Activated CD4-positive, alpha-beta memory T cell treated with anti-CD3 and anti-CD28 coated beads for 36 hours (primary cell): ENCODE measurements at regions of chr17 and their contacts with region 1.

Region 1: GRCh38 chr17:38667099-38667786 is 7.5 kb downstream of the EPOP start:
- DNase-seq: peak; percentile 75
- H3K4me3 Mint-ChIP-seq: no peak overlapping the region
- H3K27ac Mint-ChIP-seq: no peak overlapping the region
- H3K4me1 Mint-ChIP-seq: peaks cover 16% of the 10 kb centered on the region
- H3K27me3 Mint-ChIP-seq: peaks cover 43% of the 10 kb centered on the region

Region 2: DNA sequence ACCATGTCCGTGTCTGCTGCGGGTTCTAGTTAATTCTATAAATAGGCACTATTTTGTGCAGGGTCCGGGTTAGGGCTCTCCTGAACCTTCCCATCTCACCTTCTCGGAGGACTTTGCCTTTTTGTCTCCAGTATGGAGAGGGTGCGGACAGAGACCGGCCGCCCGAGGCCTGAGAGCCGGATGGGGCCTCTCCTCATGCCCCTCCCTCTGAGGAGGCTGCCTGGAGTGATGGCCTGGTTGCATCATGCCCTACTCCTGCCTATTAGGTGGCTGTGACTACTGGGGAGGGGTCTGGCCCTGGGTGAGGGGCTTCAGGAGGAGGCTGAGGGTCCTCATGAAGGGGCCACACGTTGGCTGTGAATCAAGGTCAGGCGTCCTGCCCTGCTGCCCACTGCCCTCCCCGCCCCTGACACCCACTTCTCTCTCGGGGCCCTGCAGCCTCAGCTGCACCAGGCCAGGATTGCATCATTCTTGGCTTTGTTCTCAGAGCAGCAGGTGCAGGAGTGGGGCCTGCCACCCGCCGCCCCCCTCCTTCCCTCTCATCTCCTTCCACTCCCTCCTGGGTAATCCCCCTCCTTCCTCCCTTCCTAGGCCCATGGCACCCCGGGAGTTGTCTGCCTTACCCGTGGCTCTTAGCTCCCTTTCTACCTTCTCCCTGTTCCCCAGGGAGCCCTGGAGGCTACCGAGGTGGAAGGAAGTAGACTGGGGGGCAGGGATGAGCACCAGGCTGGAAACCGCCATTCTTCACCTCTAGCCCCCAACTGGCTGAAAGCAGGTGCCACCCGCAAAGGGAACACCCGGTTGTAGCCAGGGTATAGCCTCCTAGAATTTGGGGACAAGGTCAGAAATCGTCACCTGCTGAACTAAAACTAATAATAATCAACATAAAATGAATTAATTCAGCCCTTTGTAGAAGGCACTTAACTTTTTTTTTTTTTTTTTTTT is 251.7 kb before region 1 on chr17:
- CTCF ChIA-PET with region 1: interaction called, 7 read pairs
- POLR2A ChIA-PET with region 1: no interaction called
- intact Hi-C with region 1: loop called (anchors 10 kb)
- DNase-seq: peak; percentile 48
- H3K4me3 Mint-ChIP-seq: peak overlapping the region; percentile 67
- H3K27ac Mint-ChIP-seq: peak overlapping the region; percentile 67
- H3K4me1 Mint-ChIP-seq: peaks cover 10% of the 10 kb centered on the region
- H3K27me3 Mint-ChIP-seq: peaks cover 29% of the 10 kb centered on the region

Region 3: GRCh38 chr17:38485146-38485468 is 182.1 kb before region 1 on chr17:
- CTCF ChIA-PET with region 1: interaction called, 34 read pairs
- POLR2A ChIA-PET with region 1: no interaction called
- intact Hi-C with region 1: no loop called
- DNase-seq: no peak
- H3K4me3 Mint-ChIP-seq: peak overlapping the region; percentile 36
- H3K27ac Mint-ChIP-seq: peak overlapping the region; percentile 63
- H3K4me1 Mint-ChIP-seq: peaks cover 11% of the 10 kb centered on the region
- H3K27me3 Mint-ChIP-seq: peaks cover 1% of the 10 kb centered on the region

Region 4: DNA sequence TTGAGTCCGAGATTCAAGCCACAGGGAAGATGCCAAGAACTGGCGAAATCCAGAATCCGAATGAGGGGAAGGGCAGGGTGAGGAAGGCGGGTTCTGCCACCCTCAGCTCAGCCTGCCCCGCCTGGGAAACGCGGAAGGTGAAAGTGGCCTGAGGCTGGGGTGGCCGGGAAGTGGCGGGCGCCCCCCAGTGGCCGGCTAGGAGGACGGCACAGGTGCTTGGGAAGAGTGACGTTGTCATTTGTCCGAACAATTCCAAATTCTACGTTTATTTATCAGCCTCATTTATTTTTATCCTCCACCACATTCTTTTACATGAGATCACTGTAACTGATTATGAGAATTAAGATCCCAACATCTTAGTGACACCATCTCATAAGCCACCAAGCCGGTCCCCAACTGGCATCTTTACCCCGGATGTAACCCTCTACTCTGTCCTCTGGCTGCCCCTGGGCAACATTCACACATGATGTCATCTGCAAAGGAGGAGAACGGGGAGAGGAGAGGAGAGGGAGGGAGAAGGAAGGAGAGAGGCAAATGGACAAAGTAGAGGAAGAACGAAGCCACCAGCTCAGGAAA is 82.8 kb before region 1 on chr17:
- CTCF ChIA-PET with region 1: interaction called, 33 read pairs
- POLR2A ChIA-PET with region 1: no interaction called
- intact Hi-C with region 1: no loop called
- DNase-seq: peak; percentile 73
- H3K4me3 Mint-ChIP-seq: no peak overlapping the region
- H3K27ac Mint-ChIP-seq: no peak overlapping the region
- H3K4me1 Mint-ChIP-seq: peaks cover 4% of the 10 kb centered on the region
- H3K27me3 Mint-ChIP-seq: peaks cover 69% of the 10 kb centered on the region

Region 5: DNA sequence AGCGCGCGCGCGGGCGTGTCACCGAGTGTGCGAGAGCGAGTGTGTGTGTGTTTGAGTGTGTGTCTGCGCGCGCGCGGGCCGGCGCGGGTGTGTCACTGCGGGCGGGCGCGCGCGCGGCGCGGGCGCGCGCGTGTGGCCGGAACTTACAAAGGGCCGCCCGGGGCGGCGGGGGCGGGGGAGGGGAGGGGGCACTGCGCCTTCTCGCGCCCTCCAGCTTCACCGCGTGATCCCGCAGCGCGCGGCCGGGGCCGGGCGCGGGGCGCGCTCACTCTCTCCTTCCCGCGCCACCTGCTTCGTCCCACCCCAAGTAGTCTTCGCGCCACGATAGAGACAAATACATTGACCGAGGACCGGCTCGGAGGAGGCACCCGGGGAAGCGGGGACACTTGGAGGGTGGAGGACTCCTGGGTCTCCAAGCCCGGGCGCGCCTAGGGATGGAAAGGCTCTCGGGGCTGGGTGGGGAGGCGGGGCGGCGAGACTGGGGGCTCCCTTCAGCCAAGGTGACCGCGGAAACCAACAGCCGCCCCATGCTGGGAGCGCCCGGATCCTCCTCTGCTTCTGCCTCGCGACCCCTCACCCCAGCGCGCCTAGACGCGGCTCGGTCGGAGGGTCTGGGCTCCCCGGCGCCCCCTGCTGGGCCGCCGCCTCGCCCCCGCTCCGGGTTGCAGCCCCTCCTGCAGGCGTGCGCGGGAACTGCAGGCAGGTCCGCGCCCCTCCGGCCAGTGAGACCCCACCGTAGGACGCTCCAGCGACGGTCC is 61.2 kb before region 1 on chr17 and contains the start of gene SRCIN1:
- CTCF ChIA-PET with region 1: interaction called, 21 read pairs
- POLR2A ChIA-PET with region 1: interaction called, 3 read pairs
- intact Hi-C with region 1: loop called (anchors 5 kb)
- DNase-seq: peak; percentile 70
- H3K4me3 Mint-ChIP-seq: peak within 1 kb of the TSS; percentile 65
- H3K27ac Mint-ChIP-seq: no peak within 1 kb of the TSS
- H3K4me1 Mint-ChIP-seq: peaks cover 9% of the 10 kb centered on the region
- H3K27me3 Mint-ChIP-seq: peaks cover 69% of the 10 kb centered on the region
- total RNA-seq, gene SRCIN1: 0.92 to 1.6 TPM

Region 6: GRCh38 chr17:38704645-38705522 is 37.6 kb after region 1 on chr17 and contains the start of gene MLLT6:
- CTCF ChIA-PET with region 1: no interaction called
- POLR2A ChIA-PET with region 1: no interaction called
- intact Hi-C with region 1: no loop called
- DNase-seq: peak; percentile 78
- H3K4me3 Mint-ChIP-seq: peak within 1 kb of the TSS; percentile 100
- H3K27ac Mint-ChIP-seq: peak within 1 kb of the TSS; percentile 100
- H3K4me1 Mint-ChIP-seq: peaks cover 46% of the 10 kb centered on the region
- H3K27me3 Mint-ChIP-seq: no peaks in the 10 kb centered on the region
- total RNA-seq, gene MLLT6: 204 to 221 TPM

Region 7: GRCh38 chr17:38735161-38735997 is 68.1 kb after region 1 on chr17:
- CTCF ChIA-PET with region 1: interaction called, 210 read pairs
- POLR2A ChIA-PET with region 1: interaction called, 3 read pairs
- intact Hi-C with region 1: no loop called
- DNase-seq: peak; percentile 78
- H3K4me3 Mint-ChIP-seq: no peak overlapping the region
- H3K27ac Mint-ChIP-seq: no peak overlapping the region
- H3K4me1 Mint-ChIP-seq: peaks cover 42% of the 10 kb centered on the region
- H3K27me3 Mint-ChIP-seq: peaks cover 6% of the 10 kb centered on the region

Region 8: GRCh38 chr17:39508987-39509386 is 841.7 kb after region 1 on chr17:
- CTCF ChIA-PET with region 1: no interaction called
- POLR2A ChIA-PET with region 1: no interaction called
- intact Hi-C with region 1: no loop called
- DNase-seq: no peak
- H3K4me3 Mint-ChIP-seq: no peak overlapping the region
- H3K27ac Mint-ChIP-seq: no peak overlapping the region
- H3K4me1 Mint-ChIP-seq: peaks cover 8% of the 10 kb centered on the region
- H3K27me3 Mint-ChIP-seq: no peaks in the 10 kb centered on the region